ENCODE measurements at regions of chr12 and their contacts with region 1.

Region 1: DNA sequence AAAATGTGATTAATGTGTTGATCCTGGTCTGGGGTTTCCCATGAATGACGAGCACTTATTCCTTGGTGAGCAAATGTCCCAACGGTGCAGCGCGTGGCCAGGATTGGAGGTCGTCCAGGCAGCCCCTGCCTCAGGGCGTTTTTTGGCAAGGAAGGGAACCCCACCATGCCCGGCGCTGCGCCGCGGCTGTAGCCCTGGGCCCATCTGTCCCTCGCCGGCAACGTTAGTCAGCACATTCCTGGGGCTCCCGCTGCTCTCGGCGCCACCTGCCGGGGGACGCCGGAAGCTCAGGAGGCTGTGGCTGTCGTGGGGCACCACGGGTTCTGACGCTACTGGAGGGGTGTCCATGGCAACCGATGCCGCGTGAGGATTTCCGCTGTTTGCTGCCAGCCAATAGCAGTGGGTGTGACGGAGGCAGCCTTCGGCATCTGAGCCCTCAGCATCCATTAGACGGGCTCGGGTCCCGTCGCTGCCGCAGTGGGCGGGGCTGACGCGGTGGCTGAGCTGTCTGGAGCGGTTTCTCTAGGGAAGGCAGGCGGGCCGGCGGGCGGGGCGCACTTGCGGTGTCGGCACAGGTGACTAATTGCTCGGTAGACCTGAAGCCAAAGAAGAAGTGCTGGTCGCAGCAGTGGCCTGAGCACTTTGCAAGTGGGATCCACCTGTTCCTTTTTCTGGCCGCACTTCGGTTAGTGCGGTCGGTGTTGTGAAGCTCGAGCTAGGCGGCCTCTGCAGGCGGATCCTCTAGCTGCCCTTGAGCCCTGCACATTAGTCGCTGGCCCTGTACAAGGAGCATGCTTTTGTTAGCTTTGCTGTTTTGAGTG is 29.5 kb downstream of the RAB35 start:
- DNase-seq: peak; percentile 98 to 100 (median 99)
- ATAC-seq: peak; percentile 94
- H3K4me3 ChIP-seq: peak overlapping the region; percentile 52
- H3K4me3 Mint-ChIP-seq: peak overlapping the region; percentile 80
- H3K27ac ChIP-seq: peak overlapping the region; percentile 29 to 69
- H3K27ac Mint-ChIP-seq: peak overlapping the region; percentile 83
- H3K4me1 ChIP-seq: peaks cover 14% of the 10 kb centered on the region
- H3K4me1 Mint-ChIP-seq: peaks cover 18% of the 10 kb centered on the region
- H3K27me3 ChIP-seq: no peaks in the 10 kb centered on the region
- H3K27me3 Mint-ChIP-seq: no peaks in the 10 kb centered on the region
- CTCF ChIP-seq: peak; percentile 96

Region 2: DNA sequence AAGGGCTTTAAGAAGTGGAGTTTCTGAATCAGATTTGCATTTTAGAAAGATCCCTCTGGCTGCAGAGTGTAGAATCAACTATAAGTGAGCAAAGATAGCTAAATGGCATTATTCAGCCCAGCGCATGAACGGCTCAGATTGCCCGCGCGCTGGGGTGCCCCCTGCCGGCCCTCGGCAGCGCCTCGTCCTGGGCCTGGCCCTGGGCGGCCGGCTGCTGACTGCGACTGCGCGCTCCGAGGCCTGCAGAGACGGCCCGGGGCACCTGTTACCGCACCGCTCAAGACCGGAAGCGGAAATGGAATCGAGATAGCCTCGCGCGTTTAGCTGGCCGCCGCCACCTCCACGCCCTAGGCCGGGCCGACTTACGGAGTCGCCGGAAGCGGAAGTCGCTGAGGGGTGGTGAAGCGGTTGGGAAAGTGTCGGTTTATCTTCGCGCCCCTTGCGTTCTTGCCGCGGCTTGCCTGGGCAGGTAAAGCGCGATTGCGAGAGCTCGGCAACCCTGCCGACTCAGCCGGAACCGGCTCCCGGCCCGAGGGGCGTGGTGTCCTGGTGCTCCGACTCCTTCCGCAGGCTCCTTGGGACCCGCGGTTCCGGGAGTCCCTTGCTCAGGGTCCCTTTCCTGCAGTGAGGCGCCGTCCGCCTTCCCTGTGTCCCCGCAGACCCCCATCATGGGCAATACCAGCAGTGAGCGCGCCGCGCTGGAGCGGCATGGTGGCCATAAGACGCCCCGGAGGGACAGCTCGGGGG is 419.3 kb before region 1 on chr12 and contains the start of gene PRKAB1:
- CTCF ChIA-PET with region 1: interaction called, 3 read pairs
- POLR2A ChIA-PET with region 1: no interaction called
- intact Hi-C with region 1: loop called (anchors 2 to 5 kb)
- DNase-seq: peak; percentile 87 to 99 (median 94)
- ATAC-seq: peak; percentile 88
- H3K4me3 ChIP-seq: peak within 1 kb of the TSS; percentile 90
- H3K4me3 Mint-ChIP-seq: peak within 1 kb of the TSS; percentile 92
- H3K27ac ChIP-seq: peak within 1 kb of the TSS; percentile 80 to 91
- H3K27ac Mint-ChIP-seq: peak within 1 kb of the TSS; percentile 93
- H3K4me1 ChIP-seq: peaks cover 24% of the 10 kb centered on the region
- H3K4me1 Mint-ChIP-seq: peaks cover 57% of the 10 kb centered on the region
- H3K27me3 ChIP-seq: no peaks in the 10 kb centered on the region
- H3K27me3 Mint-ChIP-seq: no peaks in the 10 kb centered on the region
- CTCF ChIP-seq: peak; percentile 96
- total RNA-seq, gene PRKAB1: 18.6 to 24.2 TPM

Region 3: GRCh38 chr12:119931402-119931801 is 155.6 kb before region 1 on chr12:
- CTCF ChIA-PET with region 1: interaction called, 4 read pairs
- POLR2A ChIA-PET with region 1: no interaction called
- intact Hi-C with region 1: loop called in 1 of 2 experiments (anchors 2 kb)
- DNase-seq: no peak
- ATAC-seq: no peak
- H3K4me3 ChIP-seq: no peak overlapping the region
- H3K4me3 Mint-ChIP-seq: no peak overlapping the region
- H3K27ac ChIP-seq: no peak overlapping the region
- H3K27ac Mint-ChIP-seq: no peak overlapping the region
- H3K4me1 ChIP-seq: no peaks in the 10 kb centered on the region
- H3K4me1 Mint-ChIP-seq: no peaks in the 10 kb centered on the region
- H3K27me3 ChIP-seq: no peaks in the 10 kb centered on the region
- H3K27me3 Mint-ChIP-seq: no peaks in the 10 kb centered on the region
- CTCF ChIP-seq: no peak

Region 4: DNA sequence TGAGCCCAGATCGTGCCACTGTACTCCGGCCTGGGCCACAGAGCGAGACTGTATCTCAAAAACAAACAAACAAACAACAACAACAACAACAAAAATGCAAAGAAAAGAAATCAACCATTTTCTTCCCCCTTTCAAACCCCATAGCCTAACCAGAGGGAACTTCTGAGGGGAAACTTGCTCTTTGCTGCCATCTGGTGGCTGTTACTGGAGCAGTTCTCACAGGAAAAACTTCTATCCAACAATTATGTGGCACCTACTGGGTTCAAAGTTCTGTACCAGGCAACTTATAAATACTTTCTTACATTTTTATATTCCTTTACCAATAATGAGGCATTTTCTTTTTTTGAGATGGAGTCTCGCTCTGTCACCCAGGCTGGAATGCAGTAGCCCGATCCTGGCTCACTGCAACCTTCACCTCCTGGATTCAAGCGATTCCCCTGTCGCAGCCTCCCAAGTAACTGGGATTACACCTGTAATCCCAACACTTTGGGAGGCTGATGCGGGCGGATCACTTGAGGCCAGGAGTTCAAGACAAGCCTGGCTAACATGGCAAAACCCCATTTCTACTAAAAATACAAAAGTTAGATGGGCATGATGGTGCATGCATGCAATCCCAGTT is 148.9 kb before region 1 on chr12:
- CTCF ChIA-PET with region 1: no interaction called
- POLR2A ChIA-PET with region 1: no interaction called
- intact Hi-C with region 1: loop called (anchors 1 kb)
- DNase-seq: peak; percentile 50 to 88 (median 62)
- ATAC-seq: peak; percentile 89
- H3K4me3 ChIP-seq: no peak overlapping the region
- H3K4me3 Mint-ChIP-seq: no peak overlapping the region
- H3K27ac ChIP-seq: no peak overlapping the region
- H3K27ac Mint-ChIP-seq: no peak overlapping the region
- H3K4me1 ChIP-seq: peaks cover 3% of the 10 kb centered on the region
- H3K4me1 Mint-ChIP-seq: no peaks in the 10 kb centered on the region
- H3K27me3 ChIP-seq: no peaks in the 10 kb centered on the region
- H3K27me3 Mint-ChIP-seq: no peaks in the 10 kb centered on the region
- CTCF ChIP-seq: peak; percentile 79

Region 5: GRCh38 chr12:120012067-120012621 is 74.9 kb before region 1 on chr12:
- CTCF ChIA-PET with region 1: interaction called, 33 read pairs
- POLR2A ChIA-PET with region 1: interaction called, 24 read pairs
- intact Hi-C with region 1: loop called (anchors 1 to 5 kb)
- DNase-seq: peak; percentile 27 to 98 (median 62)
- ATAC-seq: peak; percentile 57
- H3K4me3 ChIP-seq: peak overlapping the region; percentile 21
- H3K4me3 Mint-ChIP-seq: peak overlapping the region; percentile 76
- H3K27ac ChIP-seq: peak overlapping the region; percentile 86 to 96
- H3K27ac Mint-ChIP-seq: peak overlapping the region; percentile 96
- H3K4me1 ChIP-seq: peaks cover 75% of the 10 kb centered on the region
- H3K4me1 Mint-ChIP-seq: peaks cover 81% of the 10 kb centered on the region
- H3K27me3 ChIP-seq: no peaks in the 10 kb centered on the region
- H3K27me3 Mint-ChIP-seq: no peaks in the 10 kb centered on the region
- CTCF ChIP-seq: no peak

Region 6: GRCh38 chr12:120048263-120048662 is 38.7 kb before region 1 on chr12:
- CTCF ChIA-PET with region 1: interaction called, 5 read pairs
- POLR2A ChIA-PET with region 1: no interaction called
- intact Hi-C with region 1: loop called in 1 of 2 experiments (anchors 5 kb)
- DNase-seq: peak in 3 of 14 experiments; percentile 40 to 63 (median 41)
- ATAC-seq: peak; percentile 82
- H3K4me3 ChIP-seq: no peak overlapping the region
- H3K4me3 Mint-ChIP-seq: peak overlapping the region; percentile 21
- H3K27ac ChIP-seq: peak overlapping the region; percentile 23 to 58
- H3K27ac Mint-ChIP-seq: peak overlapping the region; percentile 84
- H3K4me1 ChIP-seq: peaks cover 9% of the 10 kb centered on the region
- H3K4me1 Mint-ChIP-seq: peaks cover 35% of the 10 kb centered on the region
- H3K27me3 ChIP-seq: no peaks in the 10 kb centered on the region
- H3K27me3 Mint-ChIP-seq: no peaks in the 10 kb centered on the region
- CTCF ChIP-seq: no peak

Region 7: GRCh38 chr12:120116792-120117651 is 30.0 kb after region 1 on chr12:
- CTCF ChIA-PET with region 1: interaction called, 11 read pairs
- POLR2A ChIA-PET with region 1: interaction called, 25 read pairs
- intact Hi-C with region 1: loop called (anchors 1 to 2 kb)
- DNase-seq: peak; percentile 96 to 99 (median 98)
- ATAC-seq: peak; percentile 75
- H3K4me3 ChIP-seq: peak overlapping the region; percentile 86
- H3K4me3 Mint-ChIP-seq: peak overlapping the region; percentile 91
- H3K27ac ChIP-seq: peak overlapping the region; percentile 94 to 95
- H3K27ac Mint-ChIP-seq: peak overlapping the region; percentile 84
- H3K4me1 ChIP-seq: peaks cover 61% of the 10 kb centered on the region
- H3K4me1 Mint-ChIP-seq: peaks cover 76% of the 10 kb centered on the region
- H3K27me3 ChIP-seq: no peaks in the 10 kb centered on the region
- H3K27me3 Mint-ChIP-seq: no peaks in the 10 kb centered on the region
- CTCF ChIP-seq: no peak

Measured in CD4-positive, alpha-beta T cell (primary cell).